ENCODE measurements at regions of chr17 and their contacts with region 1.

Region 1: GRCh38 chr17:28252436-28252835 is 66.6 kb upstream of the TMEM97 start:
- DNase-seq: no peak
- ATAC-seq: no peak
- H3K4me3 Mint-ChIP-seq: no peak overlapping the region
- H3K27ac Mint-ChIP-seq: no peak overlapping the region
- H3K4me1 Mint-ChIP-seq: peaks cover 5% of the 10 kb centered on the region; the same call in 1 of the 2 replicates
- H3K27me3 Mint-ChIP-seq: peaks cover 8% of the 10 kb centered on the region
- CTCF ChIP-seq: no peak

Region 2: GRCh38 chr17:27879987-27880608 is 372.3 kb before region 1 on chr17:
- CTCF ChIA-PET with region 1: interaction called, 20 read pairs
- POLR2A ChIA-PET with region 1: no interaction called
- DNase-seq: peak; percentile 84
- ATAC-seq: peak; percentile 95
- H3K4me3 Mint-ChIP-seq: no peak overlapping the region
- H3K27ac Mint-ChIP-seq: no peak overlapping the region
- H3K4me1 Mint-ChIP-seq: peaks cover 19% of the 10 kb centered on the region
- H3K27me3 Mint-ChIP-seq: no peaks in the 10 kb centered on the region
- CTCF ChIP-seq: peak; percentile 73; the same call in 1 of the 2 replicates

Region 3: GRCh38 chr17:28201315-28201714 is 51.1 kb before region 1 on chr17:
- CTCF ChIA-PET with region 1: interaction called, 11 read pairs
- POLR2A ChIA-PET with region 1: no interaction called
- DNase-seq: no peak
- ATAC-seq: no peak
- H3K4me3 Mint-ChIP-seq: no peak overlapping the region
- H3K27ac Mint-ChIP-seq: no peak overlapping the region
- H3K4me1 Mint-ChIP-seq: no peaks in the 10 kb centered on the region
- H3K27me3 Mint-ChIP-seq: no peaks in the 10 kb centered on the region
- CTCF ChIP-seq: no peak

Region 4: DNA sequence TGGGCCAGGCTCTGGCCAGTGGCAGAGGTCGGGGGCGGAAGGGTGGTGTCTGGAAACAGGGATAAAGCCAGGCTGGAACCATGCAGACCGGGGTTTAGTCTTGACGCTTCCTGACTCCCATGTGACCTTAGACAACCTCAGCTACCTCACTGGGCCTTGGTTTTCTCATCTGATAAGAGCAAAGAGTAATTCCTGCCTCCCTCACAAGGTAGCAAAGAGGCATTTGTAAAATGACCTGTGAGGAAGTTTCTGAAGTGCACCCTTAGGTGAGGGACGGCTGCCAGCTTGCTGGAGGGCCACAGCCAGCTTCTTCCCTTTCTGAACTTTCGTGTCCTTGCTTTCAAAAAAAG is 11.5 kb before region 1 on chr17:
- CTCF ChIA-PET with region 1: interaction called, 32 read pairs
- POLR2A ChIA-PET with region 1: no interaction called
- DNase-seq: no peak
- ATAC-seq: no peak
- H3K4me3 Mint-ChIP-seq: no peak overlapping the region
- H3K27ac Mint-ChIP-seq: no peak overlapping the region
- H3K4me1 Mint-ChIP-seq: peaks cover 11% of the 10 kb centered on the region
- H3K27me3 Mint-ChIP-seq: no peaks in the 10 kb centered on the region
- CTCF ChIP-seq: no peak

Region 5: GRCh38 chr17:28318759-28319660 is 66.6 kb after region 1 on chr17 and contains the start of gene TMEM97:
- CTCF ChIA-PET with region 1: interaction called, 10 read pairs
- POLR2A ChIA-PET with region 1: interaction called, 3 read pairs
- DNase-seq: peak; percentile 95
- ATAC-seq: peak; percentile 93
- H3K4me3 Mint-ChIP-seq: peak within 1 kb of the TSS; percentile 77
- H3K27ac Mint-ChIP-seq: peak within 1 kb of the TSS; percentile 91
- H3K4me1 Mint-ChIP-seq: peaks cover 50% of the 10 kb centered on the region
- H3K27me3 Mint-ChIP-seq: no peaks in the 10 kb centered on the region; the same call in 1 of the 2 replicates
- CTCF ChIP-seq: no peak
- total RNA-seq, gene TMEM97: 68.0 to 86.5 TPM (median 83.1 TPM) in 3 replicates

Measured in WTC11 (cell line).